G401 (cell line): ENCODE measurements at regions of chrX and their contacts with region 1.

Region 1: DNA sequence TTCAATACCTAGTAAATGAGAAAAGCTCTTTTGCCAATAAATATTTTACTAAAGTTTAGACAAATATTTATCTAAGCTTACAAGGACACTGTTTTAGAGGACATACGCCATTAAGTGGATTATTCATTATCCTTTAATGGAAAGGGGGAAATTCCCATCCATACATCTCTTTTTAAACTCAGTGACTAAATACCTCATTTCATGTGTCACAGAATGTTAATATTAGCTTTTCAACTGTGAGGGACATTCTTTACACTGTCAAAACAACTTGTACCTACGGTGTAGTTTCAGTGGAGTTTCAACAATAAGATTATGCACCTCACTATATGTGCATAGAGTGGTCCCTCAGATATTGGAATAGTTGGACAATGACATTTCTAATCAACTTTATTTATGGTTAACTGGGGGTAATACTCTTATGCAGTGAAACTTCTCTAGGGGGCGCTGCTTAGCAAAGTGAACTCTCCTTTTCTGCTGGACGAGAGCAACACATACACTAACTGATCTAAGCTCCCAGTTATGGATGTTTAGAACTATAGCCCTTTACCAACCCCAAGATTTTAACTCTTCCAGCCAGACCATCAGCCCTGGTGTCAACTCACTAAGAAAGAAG is 9.7 kb downstream of the HS6ST2 start:
- DNase-seq: no peak

Region 2: DNA sequence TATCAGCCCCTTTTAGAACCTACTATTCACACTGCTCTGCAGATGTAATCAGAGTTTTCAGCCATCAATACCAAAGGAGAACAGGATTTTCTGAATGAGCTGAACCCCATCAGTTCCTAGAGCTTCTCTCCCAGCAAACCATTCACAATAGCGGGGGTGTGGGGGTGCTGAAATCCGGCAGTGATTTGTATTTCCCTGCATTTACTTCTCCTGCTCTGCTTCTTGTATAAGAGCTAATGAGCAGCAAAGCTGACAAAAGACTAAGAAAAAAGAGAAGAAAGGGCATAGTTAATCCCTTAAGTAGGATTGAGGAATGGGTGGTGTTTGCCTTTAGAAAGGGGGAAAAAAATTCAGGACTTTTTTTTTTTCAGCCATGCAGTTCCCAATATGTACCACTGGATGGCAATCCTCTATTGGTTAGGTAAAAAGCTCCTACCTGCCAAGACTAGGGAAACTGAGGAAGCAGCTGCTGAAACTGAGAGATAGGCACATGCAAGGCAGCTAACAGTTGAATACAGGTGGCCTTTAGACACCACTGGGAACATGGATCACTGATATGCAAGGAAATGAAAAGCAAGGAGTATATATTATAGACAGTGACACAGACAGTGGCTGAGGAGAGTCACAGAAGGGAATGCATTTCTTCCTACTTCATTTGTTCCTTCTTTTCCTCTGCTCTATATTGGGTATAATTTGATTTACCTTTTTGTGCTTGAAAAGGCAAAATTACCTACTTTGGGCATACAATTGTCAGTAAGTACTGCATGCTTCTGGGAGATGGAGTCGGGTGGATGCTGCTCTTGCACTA is 208.2 kb before region 1 on chrX:
- in situ Hi-C with region 1: loop called (anchors 25 kb)
- DNase-seq: no peak

Region 3: DNA sequence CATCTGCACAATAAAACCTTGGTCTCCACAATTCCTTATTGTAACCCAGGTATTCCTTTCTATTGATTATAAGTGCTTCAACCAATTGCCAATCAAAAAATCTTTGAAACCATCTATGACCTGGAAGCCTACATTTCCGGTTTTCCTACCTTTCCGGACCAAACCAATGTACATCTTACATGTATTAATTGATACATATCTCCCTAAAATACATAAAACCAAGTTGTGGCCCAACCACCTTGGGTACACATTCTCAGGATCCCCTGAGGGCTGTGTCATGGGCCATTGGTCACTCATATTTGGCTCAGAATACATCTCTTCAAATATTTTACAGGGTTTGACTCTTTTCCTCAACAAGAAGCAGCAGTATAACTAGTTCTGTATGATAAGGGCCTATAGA is 672.0 kb after region 1 on chrX:
- in situ Hi-C with region 1: no loop called
- DNase-seq: no peak